Right lobe of liver (tissue), 6 donors: ENCODE measurements at regions of chr1 and their contacts with region 1.

Region 1: GRCh38 chr1:58896246-58897183 is 112.7 kb upstream of the JUN start:
- DNase-seq: peak in 1 of 3 donors; percentile 49
- ATAC-seq: peak; percentile 33 to 54 (median 40)
- H3K4me3 ChIP-seq: no peak overlapping the region
- H3K27ac ChIP-seq: no peak overlapping the region
- H3K4me1 ChIP-seq: peaks cover 0 to 15% (median 2%) of the 10 kb centered on the region in 4 donors
- H3K27me3 ChIP-seq: no peaks in the 10 kb centered on the region
- CTCF ChIP-seq: no peak
- POLR2A ChIP-seq: no peak

Region 2: GRCh38 chr1:58754683-58755467 is 141.6 kb before region 1 on chr1:
- intact Hi-C with region 1: no loop called
- DNase-seq: no peak
- ATAC-seq: no peak
- H3K4me3 ChIP-seq: no peak overlapping the region
- H3K27ac ChIP-seq: peak overlapping the region in 1 of 3 donors; percentile 11
- H3K4me1 ChIP-seq: peaks cover 0 to 22% (median 4%) of the 10 kb centered on the region in 4 donors
- H3K27me3 ChIP-seq: no peaks in the 10 kb centered on the region
- CTCF ChIP-seq: no peak
- POLR2A ChIP-seq: no peak

Region 3: GRCh38 chr1:58768971-58769808 is 127.3 kb before region 1 on chr1:
- intact Hi-C with region 1: no loop called
- DNase-seq: peak; percentile 78 to 80 (median 78)
- ATAC-seq: peak; percentile 72 to 81 (median 78)
- H3K4me3 ChIP-seq: no peak overlapping the region
- H3K27ac ChIP-seq: no peak overlapping the region
- H3K4me1 ChIP-seq: peaks cover 0 to 6% (median 2%) of the 10 kb centered on the region in 4 donors
- H3K27me3 ChIP-seq: no peaks in the 10 kb centered on the region
- CTCF ChIP-seq: peak; percentile 72 to 91 (median 90)
- POLR2A ChIP-seq: no peak

Region 4: DNA sequence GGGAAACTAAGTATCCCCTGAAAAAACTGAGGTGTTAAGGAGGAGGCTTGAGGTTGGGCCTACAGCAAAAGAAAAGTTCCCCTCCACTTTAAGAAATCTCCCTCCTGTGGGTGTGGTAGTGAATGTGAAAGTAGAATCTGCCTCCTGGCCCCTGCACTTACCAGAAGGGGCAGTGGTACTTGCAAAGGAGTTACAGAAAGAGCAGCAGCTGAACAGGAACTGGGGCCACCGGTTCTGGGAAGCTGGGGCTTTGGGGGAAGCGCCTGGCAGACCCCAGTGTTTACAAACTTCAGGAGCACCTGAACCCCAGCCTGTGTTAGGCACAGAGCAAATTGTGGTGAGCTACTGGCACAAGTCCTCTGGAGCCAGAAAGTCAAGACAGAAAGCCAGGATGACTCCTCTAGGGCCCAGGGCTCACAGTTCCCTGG is 150.2 kb after region 1 on chr1:
- intact Hi-C with region 1: loop called in 1 of 2 experiments (anchors 10 kb)
- DNase-seq: no peak
- ATAC-seq: peak in 2 of 4 donors; percentile 17 to 26
- H3K4me3 ChIP-seq: no peak overlapping the region
- H3K27ac ChIP-seq: no peak overlapping the region
- H3K4me1 ChIP-seq: peaks cover 0 to 25% (median 8%) of the 10 kb centered on the region in 4 donors
- H3K27me3 ChIP-seq: no peaks in the 10 kb centered on the region
- CTCF ChIP-seq: no peak
- POLR2A ChIP-seq: no peak